ENCODE measurements at regions of chr4 and their contacts with region 1.

Region 1: GRCh38 chr4:54784161-54784671 is 126.5 kb downstream of the KIT start:
- DNase-seq: peak; percentile 91
- ATAC-seq: peak; percentile 86
- H3K4me3 ChIP-seq: no peak overlapping the region
- H3K27ac ChIP-seq: peak overlapping the region; percentile 95
- H3K4me1 ChIP-seq: peaks cover 12% of the 10 kb centered on the region
- H3K27me3 ChIP-seq: no peaks in the 10 kb centered on the region
- CTCF ChIP-seq: no peak
- POLR2A ChIP-seq: no peak
- RAD21 ChIP-seq: no peak

Region 2: DNA sequence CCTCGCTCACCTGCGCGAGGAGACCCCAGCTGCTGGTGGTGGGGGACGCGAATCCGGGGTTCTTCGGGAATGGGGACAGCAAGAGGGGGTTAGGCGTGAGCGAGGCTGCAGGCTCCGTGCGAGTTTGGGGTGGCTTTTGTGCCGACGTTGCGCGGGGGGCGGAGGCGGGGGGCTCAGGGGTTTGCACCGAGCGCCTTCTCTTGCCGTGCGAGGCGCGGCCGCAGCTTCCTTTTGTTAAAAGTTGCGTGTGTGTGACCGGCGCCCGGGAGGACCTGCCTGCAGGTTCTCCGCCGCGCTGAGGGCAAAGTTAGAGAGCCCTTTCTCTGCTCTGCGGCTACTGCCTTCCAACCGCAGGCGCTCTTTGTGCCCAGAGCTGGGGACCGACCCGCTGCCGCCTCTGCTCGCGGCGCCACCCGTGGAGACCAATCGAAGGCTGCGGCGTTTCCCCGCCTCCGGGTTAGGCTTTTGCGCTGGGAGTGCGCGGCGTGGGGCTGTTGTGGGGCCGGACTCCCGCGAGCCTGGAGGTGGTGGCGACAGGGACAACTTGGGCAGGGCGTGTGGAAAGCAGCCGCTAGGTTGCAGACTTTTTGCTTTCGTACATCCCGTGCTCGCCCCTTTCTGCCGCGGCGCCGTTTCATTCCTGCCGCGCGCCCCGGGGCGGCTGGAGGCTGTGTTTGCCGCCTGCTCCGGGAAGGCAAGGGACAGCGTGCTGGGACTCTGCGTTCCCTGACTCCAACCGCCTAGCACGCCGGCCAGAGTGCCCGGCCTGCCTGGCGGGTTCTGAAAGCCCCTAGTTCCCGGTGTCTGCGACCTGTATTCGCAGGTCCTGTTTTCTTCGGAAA is 125.7 kb before region 1 on chr4:
- CTCF ChIA-PET with region 1: no interaction called
- POLR2A ChIA-PET with region 1: no interaction called
- dilution Hi-C with region 1: no loop called
- in situ Hi-C with region 1: no loop called
- intact Hi-C with region 1: loop called (anchors 5 kb)
- DNase-seq: peak; percentile 36
- ATAC-seq: peak; percentile 60
- H3K4me3 ChIP-seq: peak overlapping the region; percentile 74
- H3K27ac ChIP-seq: peak overlapping the region; percentile 36; the same call in 1 of the 2 replicates
- H3K4me1 ChIP-seq: peaks cover 16% of the 10 kb centered on the region
- H3K27me3 ChIP-seq: peaks cover 22% of the 10 kb centered on the region
- CTCF ChIP-seq: 0 out of 2 replicates have a peak, but pooled peaks have one; percentile 15
- POLR2A ChIP-seq: no peak
- RAD21 ChIP-seq: no peak

Region 3: DNA sequence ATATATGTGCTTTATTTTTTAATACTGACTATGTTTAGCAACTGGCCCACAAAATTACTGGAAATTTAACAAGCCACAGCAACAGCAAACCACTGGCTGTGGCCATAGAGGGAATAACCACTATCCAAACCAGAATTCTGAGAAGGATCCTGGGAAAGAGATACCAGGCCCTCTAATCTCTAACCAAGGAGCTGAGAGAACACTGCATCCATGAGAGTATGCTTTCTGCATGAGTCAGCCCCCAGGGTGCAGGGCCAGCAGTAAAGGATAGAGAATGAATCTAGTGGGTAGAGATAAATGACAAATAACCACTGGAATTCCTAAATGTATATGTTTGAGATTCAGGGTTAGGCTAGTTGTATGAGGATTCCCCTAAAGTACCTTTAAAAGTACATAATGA is 95.4 kb after region 1 on chr4:
- CTCF ChIA-PET with region 1: no interaction called
- POLR2A ChIA-PET with region 1: no interaction called
- dilution Hi-C with region 1: no loop called
- in situ Hi-C with region 1: loop called (anchors 25 kb)
- intact Hi-C with region 1: no loop called
- DNase-seq: peak; percentile 87
- ATAC-seq: peak; percentile 98
- H3K4me3 ChIP-seq: no peak overlapping the region
- H3K27ac ChIP-seq: no peak overlapping the region
- H3K4me1 ChIP-seq: peaks cover 4% of the 10 kb centered on the region
- H3K27me3 ChIP-seq: no peaks in the 10 kb centered on the region
- CTCF ChIP-seq: no peak
- POLR2A ChIP-seq: no peak
- RAD21 ChIP-seq: no peak

Measured in IMR-90 (cell line).